Activated naive CD4-positive, alpha-beta T cell treated with anti-CD3 and anti-CD28 coated beads for 36 hours (primary cell): ENCODE measurements at regions of chr6 and their contacts with region 1.

Region 1: DNA sequence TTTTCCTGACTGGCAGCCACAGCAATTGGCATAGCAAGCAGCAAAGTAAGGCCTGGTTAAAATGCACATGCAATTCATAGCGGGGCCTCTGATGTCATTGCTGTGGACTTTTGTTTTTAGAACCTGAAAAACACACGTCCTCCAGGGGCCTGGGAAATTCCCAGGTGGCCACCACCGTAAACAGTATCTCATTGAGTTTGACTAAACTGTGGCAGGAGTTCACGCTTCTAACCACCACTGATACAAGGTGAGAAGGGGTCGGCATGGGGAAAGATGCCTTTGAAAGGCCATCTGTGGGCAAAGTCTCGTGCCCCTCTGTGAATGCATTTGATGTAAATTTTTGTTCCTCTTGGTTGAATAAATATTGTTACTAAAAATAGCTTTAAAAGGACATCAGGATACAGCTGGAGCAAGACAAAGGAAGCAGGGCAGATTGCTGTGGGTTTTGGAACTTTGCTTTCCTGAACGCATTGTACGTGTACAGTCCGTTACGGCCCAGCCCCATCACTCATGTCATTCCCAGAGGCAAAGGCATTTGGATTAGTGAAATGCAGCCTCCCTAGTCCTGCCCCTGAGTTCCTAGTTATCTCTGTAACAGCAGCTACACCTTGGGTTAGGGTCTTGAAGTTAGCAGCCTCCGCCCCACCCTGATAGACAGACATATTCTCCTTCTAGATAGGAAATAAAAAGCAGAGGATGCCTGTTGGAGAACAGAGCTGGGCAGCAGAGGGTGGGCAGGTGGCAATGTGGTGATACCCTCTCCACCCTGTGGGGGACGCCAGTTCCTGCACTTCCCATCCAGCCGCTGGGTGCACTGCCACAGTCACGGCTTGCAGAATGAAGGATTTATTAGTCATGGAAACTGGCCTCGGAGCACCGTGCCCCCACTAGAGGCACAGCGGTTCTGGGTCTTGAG is 80.3 kb downstream of the ZDHHC14 start:
- DNase-seq: peak; percentile 91
- H3K4me3 Mint-ChIP-seq: no peak overlapping the region
- H3K27ac Mint-ChIP-seq: peak overlapping the region; percentile 65
- H3K4me1 Mint-ChIP-seq: peaks cover 36% of the 10 kb centered on the region
- H3K27me3 Mint-ChIP-seq: no peaks in the 10 kb centered on the region

Region 2: DNA sequence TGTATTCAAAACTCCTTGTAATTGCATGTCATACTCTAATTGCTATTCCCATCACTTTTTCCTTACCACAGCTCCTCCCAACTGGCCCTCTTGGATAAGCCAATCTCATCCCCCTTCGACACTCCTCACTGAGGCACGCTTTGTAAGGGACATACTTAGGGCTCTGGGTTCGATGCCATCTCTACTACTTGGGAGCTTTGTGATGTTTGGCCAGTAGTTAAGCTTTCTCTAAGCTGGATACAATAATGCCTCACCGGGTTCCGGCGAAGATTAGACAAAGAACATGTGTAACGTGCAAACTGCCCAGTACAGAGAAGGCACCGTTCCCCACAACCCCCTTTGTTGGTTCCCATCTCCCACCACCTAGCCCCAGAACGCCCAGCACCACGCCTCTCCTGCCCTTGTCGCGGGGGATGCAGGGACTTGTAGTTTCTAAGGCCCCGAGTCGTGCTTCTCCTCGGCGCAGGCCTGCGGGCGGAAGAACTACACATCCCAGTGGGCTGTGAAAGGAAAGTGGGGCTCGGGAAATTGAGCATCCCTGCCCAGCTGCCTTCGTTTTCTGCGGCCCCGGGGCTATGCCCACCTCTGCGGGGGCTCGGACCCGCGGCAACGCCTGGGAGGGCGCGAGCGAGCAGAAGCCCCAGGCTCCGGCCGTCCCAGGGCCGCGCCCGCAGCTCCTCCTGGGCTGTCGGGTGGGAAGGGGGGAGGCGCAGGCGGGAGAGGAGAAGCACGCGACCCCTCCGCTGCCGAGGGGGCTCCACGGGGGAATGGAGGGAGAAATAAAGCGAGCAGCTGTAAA is 81.4 kb before region 1 on chr6:
- CTCF ChIA-PET with region 1: interaction called, 3 read pairs
- intact Hi-C with region 1: loop called (anchors 2 kb)
- DNase-seq: peak; percentile 92
- H3K4me3 Mint-ChIP-seq: peak overlapping the region; percentile 81
- H3K27ac Mint-ChIP-seq: peak overlapping the region; percentile 59
- H3K4me1 Mint-ChIP-seq: peaks cover 36% of the 10 kb centered on the region
- H3K27me3 Mint-ChIP-seq: peaks cover 12% of the 10 kb centered on the region

Region 3: GRCh38 chr6:157563611-157564284 is 102.5 kb after region 1 on chr6:
- CTCF ChIA-PET with region 1: interaction called, 3 read pairs
- intact Hi-C with region 1: loop called (anchors 10 kb)
- DNase-seq: no peak
- H3K4me3 Mint-ChIP-seq: no peak overlapping the region
- H3K27ac Mint-ChIP-seq: no peak overlapping the region
- H3K4me1 Mint-ChIP-seq: peaks cover 10% of the 10 kb centered on the region
- H3K27me3 Mint-ChIP-seq: no peaks in the 10 kb centered on the region